ENCODE measurements at regions of chr18 and their contacts with region 1.

Region 1: GRCh38 chr18:8608795-8609658 is at the start of gene RAB12:
- DNase-seq: peak; percentile 74 to 95 (median 86)
- ATAC-seq: peak; percentile 84
- H3K4me3 ChIP-seq: peak within 1 kb of the TSS; percentile 92
- H3K4me3 Mint-ChIP-seq: peak within 1 kb of the TSS; percentile 92
- H3K27ac ChIP-seq: peak within 1 kb of the TSS in 1 of 2 donors; percentile 71
- H3K27ac Mint-ChIP-seq: peak within 1 kb of the TSS; percentile 87
- H3K4me1 ChIP-seq: peaks cover 40% of the 10 kb centered on the region
- H3K4me1 Mint-ChIP-seq: peaks cover 58% of the 10 kb centered on the region
- H3K27me3 ChIP-seq: no peaks in the 10 kb centered on the region
- H3K27me3 Mint-ChIP-seq: peaks cover 8% of the 10 kb centered on the region
- CTCF ChIP-seq: peak; percentile 61
- total RNA-seq, gene RAB12: 20.1 to 20.3 TPM

Region 2: DNA sequence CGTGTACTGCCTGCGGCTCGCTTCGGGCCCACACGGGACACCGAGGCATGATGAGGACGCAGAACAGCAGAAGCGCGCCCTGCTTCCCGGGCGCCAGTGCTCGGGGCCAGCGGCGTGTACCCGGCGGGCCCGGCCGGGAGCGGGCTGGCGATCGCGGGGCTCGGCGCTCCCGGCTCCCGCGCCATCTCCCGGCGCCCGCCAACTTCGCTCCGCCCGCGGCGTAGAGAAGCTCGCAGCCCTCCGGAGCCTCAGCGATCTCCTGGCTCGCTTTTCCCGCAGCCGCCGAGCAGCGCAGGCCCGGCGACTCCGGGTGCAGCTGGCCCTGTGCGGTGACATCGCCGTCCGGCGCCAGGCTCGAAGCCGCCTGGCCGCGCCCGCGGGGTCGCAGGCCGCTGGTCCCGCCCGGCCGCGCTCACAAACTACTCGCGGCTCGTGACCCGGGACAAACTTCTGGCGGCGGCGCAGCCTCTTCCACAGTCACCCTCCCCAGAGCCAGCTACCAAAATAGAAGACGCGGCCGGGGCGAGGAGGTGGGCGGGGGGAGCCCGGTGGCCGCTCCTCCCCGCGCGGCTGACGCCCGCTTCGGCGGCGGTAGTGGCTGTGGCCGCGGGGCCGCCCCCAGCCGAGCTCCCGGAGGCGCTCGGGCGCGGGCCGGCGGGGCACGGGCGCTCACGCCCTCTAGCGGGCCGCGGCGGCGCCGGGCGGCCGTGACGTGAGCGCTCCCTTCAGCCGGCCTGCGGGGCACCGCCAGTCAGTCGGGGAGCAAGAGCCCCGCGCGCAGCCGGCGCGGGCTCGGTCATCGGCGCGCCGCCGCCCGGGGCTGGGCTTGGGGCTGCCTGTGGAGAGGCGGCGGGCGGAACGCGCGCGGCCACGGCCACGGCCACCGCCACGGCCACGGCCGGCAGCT is 1042.2 kb before region 1 on chr18 and contains the start of gene PTPRM:
- CTCF ChIA-PET with region 1: no interaction called
- POLR2A ChIA-PET with region 1: no interaction called
- intact Hi-C with region 1: loop called in 1 of 2 experiments (anchors 5 kb)
- DNase-seq: peak in 9 of 14 experiments; percentile 8 to 86 (median 36)
- ATAC-seq: peak; percentile 83
- H3K4me3 ChIP-seq: peak within 1 kb of the TSS; percentile 60
- H3K4me3 Mint-ChIP-seq: no peak within 1 kb of the TSS
- H3K27ac ChIP-seq: no peak within 1 kb of the TSS
- H3K27ac Mint-ChIP-seq: no peak within 1 kb of the TSS
- H3K4me1 ChIP-seq: peaks cover 3% of the 10 kb centered on the region
- H3K4me1 Mint-ChIP-seq: peaks cover 14% of the 10 kb centered on the region
- H3K27me3 ChIP-seq: peaks cover 25 to 30% of the 10 kb centered on the region in 2 experiments
- H3K27me3 Mint-ChIP-seq: peaks cover 71% of the 10 kb centered on the region
- CTCF ChIP-seq: no peak
- total RNA-seq, gene PTPRM: 21.7 to 21.9 TPM

Region 3: GRCh38 chr18:8623549-8624106 is 14.6 kb after region 1 on chr18:
- CTCF ChIA-PET with region 1: interaction called, 17 read pairs
- POLR2A ChIA-PET with region 1: interaction called, 3 read pairs
- intact Hi-C with region 1: no loop called
- DNase-seq: peak in 3 of 14 experiments; percentile 22 to 38 (median 30)
- ATAC-seq: no peak
- H3K4me3 ChIP-seq: peak overlapping the region; percentile 8
- H3K4me3 Mint-ChIP-seq: no peak overlapping the region
- H3K27ac ChIP-seq: no peak overlapping the region
- H3K27ac Mint-ChIP-seq: peak overlapping the region; percentile 66
- H3K4me1 ChIP-seq: peaks cover 17% of the 10 kb centered on the region
- H3K4me1 Mint-ChIP-seq: peaks cover 75% of the 10 kb centered on the region
- H3K27me3 ChIP-seq: no peaks in the 10 kb centered on the region
- H3K27me3 Mint-ChIP-seq: no peaks in the 10 kb centered on the region
- CTCF ChIP-seq: no peak

Region 4: DNA sequence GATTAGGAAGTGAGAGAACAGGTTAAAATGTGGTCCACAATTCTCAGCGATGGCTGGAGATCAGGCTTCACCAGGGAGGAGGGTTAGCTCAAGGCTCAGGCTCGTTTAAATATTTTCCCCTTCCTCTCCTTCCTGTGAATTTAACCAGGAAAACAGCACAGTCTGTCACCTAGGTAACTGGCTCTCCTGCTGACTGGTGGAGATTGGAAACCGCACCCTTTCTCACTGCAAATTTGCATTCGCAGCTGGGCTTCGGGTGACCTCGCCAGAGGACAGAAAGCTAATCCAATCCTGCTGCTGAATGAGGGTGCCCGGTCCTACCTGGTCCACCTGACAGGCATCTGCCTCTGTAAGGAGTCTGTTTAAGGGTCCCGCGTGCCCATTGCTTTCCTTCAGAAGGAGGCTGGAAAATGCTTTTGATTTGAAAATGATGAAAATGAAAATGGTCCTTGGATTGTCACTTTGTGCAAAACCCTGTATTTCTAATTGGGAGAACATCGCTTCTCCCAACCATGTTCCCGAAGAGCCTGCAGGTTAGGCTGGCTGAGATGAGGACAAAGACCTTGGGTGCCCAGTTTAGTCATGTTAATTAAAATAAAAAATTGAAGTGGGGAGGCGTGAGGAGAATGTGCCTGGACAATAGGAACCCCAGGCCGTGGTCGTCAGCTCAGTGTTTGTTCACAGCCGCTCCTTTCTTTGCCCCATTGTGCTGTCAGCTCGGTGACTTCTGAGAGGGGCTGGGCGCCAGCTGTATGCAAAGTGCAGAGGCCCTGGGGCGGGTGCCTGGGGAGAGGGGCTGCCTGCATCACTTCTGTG is 52.9 kb after region 1 on chr18:
- CTCF ChIA-PET with region 1: no interaction called
- POLR2A ChIA-PET with region 1: no interaction called
- intact Hi-C with region 1: no loop called
- DNase-seq: no peak
- ATAC-seq: no peak
- H3K4me3 ChIP-seq: no peak overlapping the region
- H3K4me3 Mint-ChIP-seq: no peak overlapping the region
- H3K27ac ChIP-seq: no peak overlapping the region
- H3K27ac Mint-ChIP-seq: no peak overlapping the region
- H3K4me1 ChIP-seq: peaks cover 3% of the 10 kb centered on the region
- H3K4me1 Mint-ChIP-seq: no peaks in the 10 kb centered on the region
- H3K27me3 ChIP-seq: no peaks in the 10 kb centered on the region
- H3K27me3 Mint-ChIP-seq: peaks cover 6% of the 10 kb centered on the region
- CTCF ChIP-seq: no peak

Region 5: DNA sequence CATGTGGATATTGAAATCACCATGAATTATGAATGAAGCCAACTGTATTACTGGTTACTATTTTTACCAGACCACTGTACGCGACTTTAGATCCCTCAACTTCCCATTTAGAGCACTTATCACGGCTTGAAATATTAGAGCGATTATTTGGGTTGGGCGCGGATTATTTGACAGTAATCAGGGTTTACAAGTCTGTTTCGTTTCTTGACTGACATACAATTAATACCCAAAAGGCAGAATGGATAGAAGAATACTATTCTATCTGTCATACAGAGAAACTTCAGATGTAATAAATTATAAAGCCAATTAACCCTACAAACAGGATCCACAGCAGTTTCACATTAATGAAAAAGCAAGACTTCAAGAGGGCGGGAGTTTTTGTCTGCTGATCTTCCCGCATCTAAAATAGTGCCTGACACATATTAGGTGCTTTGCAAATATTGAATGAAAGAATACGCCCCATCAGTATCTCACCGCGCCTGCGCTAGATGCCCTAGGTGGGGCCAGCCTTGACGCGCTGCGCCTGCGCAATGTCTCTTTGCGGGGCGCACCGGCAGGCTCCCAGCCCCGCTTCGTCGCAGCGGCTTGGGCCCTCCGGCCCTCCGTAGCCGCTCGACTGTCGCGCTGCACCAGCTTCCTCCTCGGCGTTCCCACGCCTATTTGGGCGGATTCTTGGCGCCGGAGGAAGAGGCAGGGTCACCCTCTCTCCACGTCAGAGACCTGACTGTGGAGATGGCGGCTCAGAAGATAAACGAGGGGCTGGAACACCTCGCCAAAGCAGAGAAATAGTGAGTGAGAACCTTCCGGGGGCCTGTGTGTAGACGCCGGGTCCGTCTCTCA is 1916.6 kb after region 1 on chr18 and contains the start of gene NAPG:
- CTCF ChIA-PET with region 1: no interaction called
- POLR2A ChIA-PET with region 1: no interaction called
- intact Hi-C with region 1: loop called in 1 of 2 experiments (anchors 5 kb)
- DNase-seq: peak; percentile 75 to 98 (median 86)
- ATAC-seq: peak; percentile 85
- H3K4me3 ChIP-seq: peak within 1 kb of the TSS; percentile 87
- H3K4me3 Mint-ChIP-seq: peak within 1 kb of the TSS; percentile 99
- H3K27ac ChIP-seq: peak within 1 kb of the TSS; percentile 55 to 86
- H3K27ac Mint-ChIP-seq: peak within 1 kb of the TSS; percentile 96
- H3K4me1 ChIP-seq: peaks cover 42% of the 10 kb centered on the region
- H3K4me1 Mint-ChIP-seq: peaks cover 56% of the 10 kb centered on the region
- H3K27me3 ChIP-seq: peaks cover 0 to 5% of the 10 kb centered on the region in 2 experiments
- H3K27me3 Mint-ChIP-seq: no peaks in the 10 kb centered on the region
- CTCF ChIP-seq: no peak
- total RNA-seq, gene NAPG: 25.9 to 27.3 TPM

Measured in CD4-positive, alpha-beta T cell (primary cell).